Activated CD8-positive, alpha-beta T cell treated with anti-CD3 and anti-CD28 coated beads for 36 hours (primary cell): ENCODE measurements at regions of chr17 and their contacts with region 1.

Region 1: DNA sequence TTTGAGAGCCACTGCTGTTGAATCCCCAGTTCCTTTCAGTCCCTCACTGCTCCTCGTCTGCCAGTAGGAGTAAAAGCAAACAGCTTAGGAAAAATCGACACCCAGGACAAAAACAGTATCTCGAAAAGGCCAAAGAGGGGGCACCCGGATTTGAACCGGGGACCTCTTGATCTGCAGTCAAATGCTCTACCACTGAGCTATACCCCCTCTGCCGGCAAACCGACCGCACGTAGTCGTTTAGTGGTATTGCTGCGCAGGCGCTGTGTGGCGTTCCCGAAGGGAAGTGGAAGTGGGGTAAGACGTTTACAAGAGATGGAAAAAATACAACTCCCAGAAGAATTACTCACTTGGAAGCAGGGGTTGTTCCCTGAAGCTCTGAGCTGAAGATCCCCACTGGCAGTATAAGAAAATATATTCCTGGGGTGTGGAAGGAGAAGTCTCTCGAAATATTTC is 2.2 kb upstream of the PLXDC1 start:
- DNase-seq: peak; percentile 91
- ATAC-seq: peak; percentile 43
- H3K4me3 Mint-ChIP-seq: peak overlapping the region; percentile 86
- H3K27ac Mint-ChIP-seq: peak overlapping the region; percentile 89
- H3K4me1 Mint-ChIP-seq: peaks cover 33% of the 10 kb centered on the region
- H3K27me3 Mint-ChIP-seq: peaks cover 2% of the 10 kb centered on the region
- CTCF ChIP-seq: no peak

Region 2: GRCh38 chr17:38967290-38967738 is 186.3 kb before region 1 on chr17 and contains the start of gene FBXO47:
- CTCF ChIA-PET with region 1: interaction called, 10 read pairs
- POLR2A ChIA-PET with region 1: no interaction called
- intact Hi-C with region 1: no loop called
- DNase-seq: peak; percentile 95
- ATAC-seq: peak; percentile 97
- H3K4me3 Mint-ChIP-seq: peak within 1 kb of the TSS; percentile 74
- H3K27ac Mint-ChIP-seq: peak within 1 kb of the TSS; percentile 83
- H3K4me1 Mint-ChIP-seq: peaks cover 18% of the 10 kb centered on the region
- H3K27me3 Mint-ChIP-seq: no peaks in the 10 kb centered on the region
- CTCF ChIP-seq: no peak
- total RNA-seq, gene FBXO47: not detected

Region 3: DNA sequence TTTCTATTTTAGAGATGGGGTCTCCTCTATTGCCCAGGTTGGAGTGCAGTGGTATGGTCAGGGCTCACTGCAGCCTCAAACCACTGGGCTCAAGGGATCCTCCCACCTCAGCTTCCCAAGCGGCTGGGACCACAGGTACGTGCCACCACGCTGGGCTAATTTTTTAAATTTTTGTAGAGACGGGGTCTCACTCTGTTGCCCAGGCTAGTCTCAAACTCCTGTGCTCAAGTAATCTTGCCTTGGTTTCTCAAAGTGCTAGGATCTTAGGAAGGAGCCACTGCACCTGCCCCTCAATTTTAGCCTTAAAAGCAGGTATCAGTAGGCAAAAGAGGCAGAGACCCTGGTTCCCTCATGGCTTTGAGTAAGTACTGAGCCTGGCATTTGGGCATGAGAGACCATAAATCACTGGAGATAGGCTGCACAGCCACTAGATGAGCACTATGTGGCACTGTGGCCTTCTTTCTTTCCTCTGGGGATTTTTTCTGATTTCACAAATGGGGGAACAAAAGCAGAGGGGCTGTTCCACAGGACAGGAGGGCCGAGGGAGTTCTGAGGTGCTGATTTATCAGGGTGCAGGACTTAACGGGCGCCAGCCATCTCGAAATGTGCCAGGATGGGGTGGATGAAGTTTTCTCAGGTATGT is 84.4 kb before region 1 on chr17:
- CTCF ChIA-PET with region 1: interaction called, 19 read pairs
- POLR2A ChIA-PET with region 1: interaction called, 4 read pairs
- intact Hi-C with region 1: loop called (anchors 2 kb)
- DNase-seq: peak; percentile 45
- ATAC-seq: peak; percentile 96
- H3K4me3 Mint-ChIP-seq: no peak overlapping the region
- H3K27ac Mint-ChIP-seq: no peak overlapping the region
- H3K4me1 Mint-ChIP-seq: peaks cover 5% of the 10 kb centered on the region
- H3K27me3 Mint-ChIP-seq: no peaks in the 10 kb centered on the region
- CTCF ChIP-seq: peak; percentile 57

Region 4: DNA sequence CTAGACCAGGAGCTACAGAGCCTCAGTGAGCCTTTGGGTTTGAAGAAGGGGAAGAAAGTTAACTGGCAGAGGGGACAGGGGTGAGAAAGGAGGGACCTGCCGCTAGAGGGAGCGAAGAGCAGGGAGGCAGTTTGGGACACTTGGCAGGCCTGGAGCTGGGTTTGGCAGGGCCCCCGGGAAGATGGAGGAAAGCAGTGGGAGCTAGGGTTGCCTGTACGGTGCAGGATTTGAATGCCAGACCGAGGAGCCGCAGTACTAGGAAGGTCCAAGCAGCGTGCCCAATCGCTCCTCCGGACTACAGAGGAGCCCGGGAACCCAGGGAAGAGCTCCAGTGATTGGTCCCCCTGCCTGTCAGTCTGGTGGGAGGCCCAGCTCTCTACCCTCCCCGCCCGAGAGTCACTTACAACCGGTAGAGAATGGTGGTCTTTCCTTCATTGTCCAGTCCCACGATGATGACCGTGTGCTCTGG is 11.1 kb after region 1 on chr17:
- CTCF ChIA-PET with region 1: interaction called, 99 read pairs
- POLR2A ChIA-PET with region 1: interaction called, 32 read pairs
- intact Hi-C with region 1: no loop called
- DNase-seq: peak; percentile 90
- ATAC-seq: peak; percentile 97
- H3K4me3 Mint-ChIP-seq: peak overlapping the region; percentile 79
- H3K27ac Mint-ChIP-seq: peak overlapping the region; percentile 55
- H3K4me1 Mint-ChIP-seq: peaks cover 14% of the 10 kb centered on the region
- H3K27me3 Mint-ChIP-seq: peaks cover 12% of the 10 kb centered on the region
- CTCF ChIP-seq: peak; percentile 91

Region 5: DNA sequence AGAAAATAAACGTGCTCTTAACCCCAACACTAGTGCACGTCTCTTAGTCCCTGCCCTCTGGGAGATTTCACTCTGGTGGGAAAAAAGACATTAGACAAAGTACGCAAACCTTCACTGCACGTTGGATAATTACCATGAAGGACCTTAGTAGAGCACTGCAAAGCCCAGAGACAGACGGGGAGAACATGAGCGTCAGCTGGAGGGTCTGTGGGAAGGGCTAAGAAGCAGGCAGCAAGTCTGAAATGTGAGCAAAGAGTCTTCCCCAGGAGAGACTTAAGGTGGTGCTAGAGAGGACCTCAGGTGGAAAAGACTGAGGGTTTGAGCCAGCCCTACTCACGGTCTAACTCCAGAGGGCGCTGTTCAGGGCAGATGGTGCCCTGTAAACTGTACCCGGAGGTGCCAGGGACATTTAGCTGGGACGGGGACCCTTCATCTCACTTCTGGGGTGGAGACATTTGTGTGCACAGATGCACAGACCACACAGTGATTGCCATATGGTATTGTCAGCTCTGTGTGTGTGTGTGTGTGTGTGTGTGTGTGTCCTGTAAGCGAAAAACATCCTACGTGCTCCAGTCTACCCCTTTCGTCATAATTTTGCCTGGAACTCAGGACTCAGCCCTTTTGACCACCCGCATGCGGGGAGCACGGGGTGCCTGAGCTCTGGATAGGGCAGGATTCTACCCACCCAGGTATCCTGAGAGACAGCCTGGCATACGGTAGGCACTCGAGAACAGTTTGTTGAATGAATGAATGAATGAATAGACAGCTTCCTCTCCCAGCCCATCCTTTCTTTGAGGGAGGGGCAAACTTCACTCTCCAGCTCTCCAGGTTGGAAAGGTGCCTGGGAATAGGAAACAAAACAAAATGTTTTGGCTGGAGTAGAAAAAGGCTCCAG is 82.2 kb after region 1 on chr17:
- CTCF ChIA-PET with region 1: interaction called, 14 read pairs
- POLR2A ChIA-PET with region 1: interaction called, 3 read pairs
- intact Hi-C with region 1: no loop called
- DNase-seq: peak; percentile 80
- ATAC-seq: peak; percentile 77
- H3K4me3 Mint-ChIP-seq: no peak overlapping the region
- H3K27ac Mint-ChIP-seq: no peak overlapping the region
- H3K4me1 Mint-ChIP-seq: peaks cover 35% of the 10 kb centered on the region
- H3K27me3 Mint-ChIP-seq: peaks cover 2% of the 10 kb centered on the region
- CTCF ChIP-seq: peak; percentile 83

Region 6: DNA sequence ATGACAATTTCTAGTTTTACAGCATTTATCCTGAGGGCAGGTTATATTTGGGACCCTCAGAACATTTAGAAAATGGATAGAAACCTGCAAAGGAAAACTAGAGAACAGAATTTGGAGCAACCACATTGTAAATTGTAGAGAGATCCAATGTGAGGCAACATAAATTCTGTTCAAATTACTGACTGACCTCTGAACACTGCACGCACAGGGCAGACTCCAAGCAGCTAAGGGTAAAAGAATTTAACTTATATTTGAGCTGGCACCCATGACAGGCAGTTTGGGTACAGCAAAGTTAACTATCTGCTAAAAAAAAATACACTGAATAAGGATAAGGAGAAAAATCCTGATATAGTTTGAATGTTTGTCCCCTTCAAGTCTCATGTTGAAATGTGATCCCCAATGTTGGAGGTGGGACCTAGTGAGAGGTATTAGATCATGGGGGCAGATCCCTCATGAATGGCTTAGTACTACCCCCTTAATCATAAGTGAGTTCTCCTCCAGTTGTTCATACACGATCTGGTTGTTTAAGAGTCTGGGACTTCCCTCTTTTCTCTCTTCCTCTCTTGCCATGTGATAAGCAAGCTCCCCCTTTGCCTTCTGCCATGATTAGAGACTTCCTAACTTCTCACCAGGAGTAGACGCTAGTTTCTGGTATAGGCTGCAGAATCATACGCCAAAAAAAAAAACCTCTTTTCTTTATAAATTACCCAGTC is 172.1 kb after region 1 on chr17:
- CTCF ChIA-PET with region 1: no interaction called
- POLR2A ChIA-PET with region 1: no interaction called
- intact Hi-C with region 1: no loop called
- DNase-seq: no peak
- ATAC-seq: no peak
- H3K4me3 Mint-ChIP-seq: no peak overlapping the region
- H3K27ac Mint-ChIP-seq: no peak overlapping the region
- H3K4me1 Mint-ChIP-seq: peaks cover 8% of the 10 kb centered on the region
- H3K27me3 Mint-ChIP-seq: no peaks in the 10 kb centered on the region
- CTCF ChIP-seq: no peak